ENCODE measurements at regions of chr9 and their contacts with region 1.

Region 1: GRCh38 chr9:96327694-96328352 is 25.8 kb upstream of the HSD17B3 start:
- DNase-seq: no peak
- H3K4me3 ChIP-seq: no peak overlapping the region
- H3K27ac ChIP-seq: no peak overlapping the region
- H3K4me1 ChIP-seq: no peaks in the 10 kb centered on the region
- H3K27me3 ChIP-seq: no peaks in the 10 kb centered on the region
- CTCF ChIP-seq: peak; percentile 76 to 92 (median 90)
- POLR2A ChIP-seq: no peak

Region 2: GRCh38 chr9:96418074-96418809 is 90.4 kb after region 1 on chr9 and contains the start of gene ZNF367:
- intact Hi-C with region 1: loop called (anchors 10 kb)
- DNase-seq: peak; percentile 85
- H3K4me3 ChIP-seq: peak within 1 kb of the TSS; percentile 71 to 89 (median 80)
- H3K27ac ChIP-seq: peak within 1 kb of the TSS; percentile 97 to 100 (median 99)
- H3K4me1 ChIP-seq: peaks cover 13 to 50% (median 24%) of the 10 kb centered on the region in 3 donors
- H3K27me3 ChIP-seq: no peaks in the 10 kb centered on the region
- CTCF ChIP-seq: no peak
- POLR2A ChIP-seq: peak in 3 of 4 donors; percentile 22 to 71 (median 52)
- total RNA-seq, gene ZNF367: 2.2 to 7.1 (median 4.6) TPM

Region 3: DNA sequence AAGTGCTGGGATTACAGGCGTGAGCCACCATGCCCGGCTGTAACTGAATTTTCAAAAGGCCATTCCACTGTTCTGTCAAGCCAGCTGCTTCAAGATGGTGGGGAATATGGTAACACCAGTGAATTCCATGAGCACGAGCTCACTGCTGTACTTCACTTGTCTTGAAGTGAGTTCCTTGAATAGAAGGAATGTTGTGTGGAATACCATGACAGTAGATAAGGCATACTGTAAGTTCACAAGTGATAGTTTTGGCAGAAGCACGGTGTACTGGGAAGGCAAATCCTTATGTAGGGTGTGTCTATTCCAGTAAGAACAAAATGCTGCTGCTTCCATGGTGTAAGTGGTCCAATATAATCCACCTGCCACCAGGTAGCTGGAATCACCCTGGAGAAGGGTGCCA is 333.9 kb after region 1 on chr9:
- intact Hi-C with region 1: loop called (anchors 10 kb)
- DNase-seq: no peak
- H3K4me3 ChIP-seq: no peak overlapping the region
- H3K27ac ChIP-seq: no peak overlapping the region
- H3K4me1 ChIP-seq: peaks cover 0 to 10% (median 0%) of the 10 kb centered on the region in 3 donors
- H3K27me3 ChIP-seq: no peaks in the 10 kb centered on the region
- CTCF ChIP-seq: no peak
- POLR2A ChIP-seq: no peak